ENCODE measurements at regions of chr11 and their contacts with region 1.

Region 1: GRCh38 chr11:27698872-27699474 is 1.3 kb downstream of the BDNF start:
- DNase-seq: peak; percentile 96
- ATAC-seq: peak; percentile 81
- H3K4me3 Mint-ChIP-seq: peak overlapping the region; percentile 93
- H3K27ac Mint-ChIP-seq: peak overlapping the region; percentile 95
- H3K4me1 Mint-ChIP-seq: peaks cover 66% of the 10 kb centered on the region
- H3K27me3 Mint-ChIP-seq: peaks cover 32% of the 10 kb centered on the region
- CTCF ChIP-seq: peak; percentile 75

Region 2: GRCh38 chr11:27642954-27643353 is 56.0 kb before region 1 on chr11:
- CTCF ChIA-PET with region 1: interaction called, 33 read pairs
- POLR2A ChIA-PET with region 1: no interaction called
- DNase-seq: no peak
- ATAC-seq: peak; percentile 46; the same call in 1 of the 2 replicates
- H3K4me3 Mint-ChIP-seq: no peak overlapping the region
- H3K27ac Mint-ChIP-seq: no peak overlapping the region
- H3K4me1 Mint-ChIP-seq: peaks cover 38% of the 10 kb centered on the region
- H3K27me3 Mint-ChIP-seq: peaks cover 4% of the 10 kb centered on the region
- CTCF ChIP-seq: no peak

Region 3: DNA sequence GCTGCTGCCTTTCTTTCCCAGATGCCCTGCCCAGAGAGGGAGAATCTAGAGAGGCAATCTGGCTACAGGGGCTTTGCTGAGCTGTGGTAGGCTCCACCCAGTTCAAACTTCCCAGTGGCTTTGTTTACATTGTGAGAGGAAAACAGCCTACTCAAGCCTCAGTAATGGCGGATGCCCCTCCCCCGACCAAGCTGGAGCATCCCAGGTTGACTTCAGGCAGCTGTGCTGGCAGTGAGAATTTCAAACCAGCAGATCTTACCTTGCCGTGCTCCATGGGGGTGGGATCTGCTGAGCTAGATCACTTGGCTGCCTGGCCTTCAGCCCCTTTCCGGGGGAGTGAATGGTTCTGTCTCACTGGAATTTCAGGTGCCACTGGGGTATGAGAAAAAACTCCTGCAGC is 10.9 kb before region 1 on chr11:
- CTCF ChIA-PET with region 1: interaction called, 18 read pairs
- POLR2A ChIA-PET with region 1: no interaction called
- DNase-seq: peak; percentile 77
- ATAC-seq: peak; percentile 85
- H3K4me3 Mint-ChIP-seq: no peak overlapping the region
- H3K27ac Mint-ChIP-seq: peak overlapping the region; percentile 21; the same call in 1 of the 2 replicates
- H3K4me1 Mint-ChIP-seq: peaks cover 52% of the 10 kb centered on the region
- H3K27me3 Mint-ChIP-seq: no peaks in the 10 kb centered on the region; the same call in none of the 2 replicates
- CTCF ChIP-seq: no peak

Region 4: GRCh38 chr11:27963370-27963769 is 264.4 kb after region 1 on chr11:
- CTCF ChIA-PET with region 1: interaction called, 13 read pairs
- POLR2A ChIA-PET with region 1: no interaction called
- DNase-seq: no peak
- ATAC-seq: no peak
- H3K4me3 Mint-ChIP-seq: no peak overlapping the region; the same call in 1 of the 2 replicates
- H3K27ac Mint-ChIP-seq: no peak overlapping the region
- H3K4me1 Mint-ChIP-seq: peaks cover 60% of the 10 kb centered on the region
- H3K27me3 Mint-ChIP-seq: peaks cover 3% of the 10 kb centered on the region
- CTCF ChIP-seq: no peak

Region 5: GRCh38 chr11:28529540-28530410 is 830.8 kb after region 1 on chr11:
- CTCF ChIA-PET with region 1: interaction called, 44 read pairs
- POLR2A ChIA-PET with region 1: no interaction called
- DNase-seq: no peak
- ATAC-seq: peak; percentile 48
- H3K4me3 Mint-ChIP-seq: no peak overlapping the region
- H3K27ac Mint-ChIP-seq: no peak overlapping the region
- H3K4me1 Mint-ChIP-seq: no peaks in the 10 kb centered on the region
- H3K27me3 Mint-ChIP-seq: no peaks in the 10 kb centered on the region
- CTCF ChIP-seq: peak; percentile 56

Region 6: DNA sequence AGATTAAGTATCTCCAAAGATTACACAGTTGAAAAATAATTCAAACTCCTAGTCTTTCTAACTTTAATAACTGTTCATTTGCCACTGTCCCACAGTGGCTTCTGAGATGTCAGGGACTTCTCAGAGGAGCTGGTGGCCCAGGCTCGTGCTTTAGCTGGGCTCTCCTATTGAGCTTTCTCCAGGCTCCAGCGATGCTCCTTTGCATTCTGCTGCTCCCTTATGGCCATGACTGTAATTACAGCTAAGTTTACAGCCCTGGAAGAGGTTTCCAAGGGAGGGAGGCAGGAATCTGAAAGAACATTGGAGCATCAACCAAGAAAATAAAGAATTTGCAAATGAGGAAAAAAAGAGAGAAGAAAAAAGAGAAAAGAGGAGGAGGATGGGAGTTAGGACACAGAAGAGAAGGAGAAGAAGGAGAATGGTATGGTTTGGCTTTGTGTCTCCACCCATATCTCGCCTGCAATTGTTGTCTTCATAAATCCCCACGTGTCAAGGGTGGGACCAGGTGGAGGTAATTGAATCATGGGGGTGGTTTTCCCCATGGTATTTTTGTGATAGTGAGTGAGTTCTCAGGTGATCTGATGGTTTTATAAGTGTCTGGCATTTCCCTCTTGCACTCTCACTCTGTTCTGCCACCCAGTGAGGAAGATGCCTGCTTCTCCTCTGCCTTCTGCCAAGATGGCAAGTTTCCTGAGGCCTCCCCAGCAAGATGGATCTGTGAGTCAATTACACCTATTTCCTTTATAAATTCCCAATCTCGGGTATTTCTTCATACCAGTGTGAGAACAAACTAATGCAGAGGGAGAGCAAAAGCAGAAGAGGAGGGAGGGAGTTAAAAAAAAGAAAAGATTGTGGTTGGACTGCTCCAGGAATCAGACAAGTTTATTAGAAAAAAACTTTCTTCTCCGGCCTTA is 1460.8 kb after region 1 on chr11:
- CTCF ChIA-PET with region 1: interaction called, 14 read pairs
- POLR2A ChIA-PET with region 1: no interaction called
- DNase-seq: peak; percentile 64
- ATAC-seq: peak; percentile 100
- H3K4me3 Mint-ChIP-seq: no peak overlapping the region
- H3K27ac Mint-ChIP-seq: no peak overlapping the region
- H3K4me1 Mint-ChIP-seq: peaks cover 9% of the 10 kb centered on the region
- H3K27me3 Mint-ChIP-seq: no peaks in the 10 kb centered on the region
- CTCF ChIP-seq: peak; percentile 34